Sciatic nerve (tissue), 2 donors: ENCODE measurements at regions of chr7 and their contacts with region 1.

Region 1: DNA sequence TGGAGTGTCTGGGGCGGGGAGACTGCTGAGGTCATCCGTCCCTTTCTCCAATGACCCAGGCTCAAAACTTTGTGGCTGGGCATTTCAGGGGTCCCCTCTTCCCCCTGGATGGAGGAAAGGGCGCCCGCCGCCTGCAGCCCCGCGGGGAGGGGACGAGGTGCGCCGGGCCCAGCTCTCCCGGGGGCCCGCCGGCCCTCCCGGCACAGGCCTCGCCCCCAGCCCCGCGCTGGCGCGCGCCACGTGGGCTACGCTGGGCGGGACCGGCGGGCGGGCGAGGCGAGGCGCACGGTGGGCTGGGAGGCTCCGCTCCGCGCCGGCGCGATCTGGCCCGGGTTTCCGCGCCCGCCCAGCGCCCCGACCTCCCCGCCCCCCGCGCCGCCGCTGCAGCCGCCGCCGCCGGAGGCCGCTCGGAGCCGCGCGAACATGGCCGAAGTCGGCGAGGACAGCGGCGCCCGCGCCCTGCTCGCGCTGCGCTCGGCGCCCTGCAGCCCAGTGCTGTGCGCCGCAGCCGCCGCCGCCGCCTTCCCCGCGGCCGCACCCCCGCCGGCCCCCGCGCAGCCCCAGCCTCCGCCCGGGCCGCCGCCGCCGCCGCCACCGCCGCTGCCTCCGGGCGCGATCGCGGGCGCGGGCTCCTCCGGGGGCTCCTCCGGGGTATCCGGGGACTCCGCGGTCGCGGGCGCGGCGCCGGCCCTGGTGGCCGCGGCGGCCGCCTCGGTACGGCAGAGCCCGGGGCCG is at the start of gene FOXK1:
- DNase-seq: peak; percentile 88
- ATAC-seq: peak; percentile 76
- total RNA-seq, gene FOXK1: 37.7 TPM

Region 2: DNA sequence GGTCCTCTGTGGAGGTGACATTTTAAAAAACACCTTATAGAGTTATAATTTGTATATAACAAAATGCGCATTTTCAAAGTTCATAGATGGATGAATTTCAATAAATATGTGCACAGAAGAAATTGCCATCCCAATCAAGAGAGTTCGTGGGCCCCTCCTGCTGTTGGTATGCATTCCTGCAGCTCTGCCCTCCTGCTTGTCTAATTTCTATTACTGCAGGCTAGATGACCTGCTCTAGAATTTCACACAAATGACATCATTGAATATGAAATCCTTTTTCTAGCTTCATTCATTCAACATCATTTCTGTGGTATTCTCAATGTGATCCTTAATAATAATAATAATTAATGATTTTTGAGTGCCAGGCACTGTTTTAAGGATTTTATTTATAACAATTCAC is 1032.8 kb before region 1 on chr7:
- intact Hi-C with region 1: no loop called
- DNase-seq: no peak
- ATAC-seq: no peak

Region 3: DNA sequence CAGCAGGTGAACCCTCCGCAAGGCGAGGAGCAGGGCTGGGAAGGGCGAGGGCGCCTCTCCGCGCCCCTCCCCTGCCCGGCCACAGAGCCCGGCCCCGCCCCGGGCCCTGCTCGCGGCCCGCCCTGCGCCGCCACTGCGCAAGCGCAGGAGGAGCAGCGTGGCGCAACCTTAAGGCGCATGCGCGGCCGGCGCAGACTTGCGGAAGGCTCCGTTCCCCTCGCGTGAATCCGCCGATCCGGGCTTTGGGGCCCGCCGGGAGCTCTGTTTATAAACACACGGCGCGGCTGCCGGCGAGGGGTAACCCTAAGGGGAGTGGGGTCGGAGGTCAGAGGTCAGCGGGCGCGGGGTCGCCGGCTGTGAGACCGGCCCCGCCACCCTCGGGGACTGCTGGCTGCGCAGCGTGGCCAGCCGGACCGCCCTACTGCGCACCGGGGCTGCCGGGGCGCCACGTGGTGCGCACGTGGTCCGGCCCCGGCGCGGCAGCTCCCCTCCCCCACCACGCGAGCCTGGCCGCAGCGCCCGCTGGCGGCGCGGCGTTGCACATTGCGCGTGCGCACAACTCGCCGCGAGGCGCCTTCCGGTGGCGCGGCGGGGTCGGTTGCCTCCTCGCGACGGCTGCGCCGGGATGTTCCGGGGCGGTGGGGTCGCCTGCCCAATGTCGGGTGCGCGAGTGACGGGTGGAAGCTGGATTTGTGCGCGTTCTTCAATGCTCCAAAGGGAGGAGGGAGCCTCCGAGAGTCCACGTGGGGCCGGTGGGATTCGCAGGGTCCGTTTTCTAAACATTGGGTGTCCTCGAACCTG is 40.2 kb before region 1 on chr7:
- intact Hi-C with region 1: loop called (anchors 5 kb)
- DNase-seq: peak; percentile 98
- ATAC-seq: peak; percentile 97

Region 4: DNA sequence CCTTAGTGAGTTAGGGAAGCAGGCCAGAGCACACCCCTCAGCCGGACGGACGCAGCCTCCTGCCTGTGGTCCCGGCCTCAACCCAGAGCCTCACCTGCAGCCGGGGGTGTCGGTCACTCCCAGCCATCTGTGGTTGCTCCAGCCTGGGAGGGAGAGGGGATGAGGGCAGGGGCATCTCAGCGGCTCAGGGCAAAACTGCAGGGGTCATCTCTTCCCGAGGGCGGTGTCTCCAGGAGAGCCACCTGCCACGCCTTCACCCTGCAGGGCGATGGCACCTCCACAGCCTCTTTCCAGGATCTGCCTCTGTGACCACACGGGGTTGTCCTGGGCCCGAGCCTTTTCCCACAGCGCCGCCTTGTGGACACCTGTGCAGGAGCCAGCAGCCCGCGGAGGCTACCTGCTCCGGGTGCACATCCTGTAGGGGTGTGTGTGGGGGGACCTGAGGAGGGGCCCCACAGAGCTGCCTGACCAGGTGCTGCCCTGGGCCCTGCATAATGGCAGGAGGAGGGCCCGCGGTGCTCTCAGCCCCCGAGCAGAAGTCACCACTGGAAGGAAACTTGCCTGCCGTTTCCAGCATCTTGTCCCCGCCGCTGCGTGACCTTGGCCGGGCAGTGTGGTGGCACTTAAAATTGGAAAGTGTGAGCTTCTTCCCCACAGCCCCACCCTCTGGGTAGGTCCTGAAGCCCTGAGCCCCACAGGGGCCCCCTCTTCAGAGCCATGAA is 71.8 kb after region 1 on chr7:
- intact Hi-C with region 1: loop called (anchors 10 kb)
- DNase-seq: peak; percentile 90
- ATAC-seq: peak; percentile 85